ENCODE measurements at regions of chr9 and their contacts with region 1.

Region 1: GRCh38 chr9:25350011-25350410 is 328.2 kb downstream of the TUSC1 start:
- DNase-seq: no peak
- H3K4me3 ChIP-seq: no peak overlapping the region
- H3K27ac ChIP-seq: no peak overlapping the region
- H3K4me1 ChIP-seq: no peaks in the 10 kb centered on the region
- H3K27me3 ChIP-seq: no peaks in the 10 kb centered on the region
- CTCF ChIP-seq: no peak
- EP300 ChIP-seq: no peak
- POLR2A ChIP-seq: no peak

Region 2: GRCh38 chr9:25302601-25303000 is 47.4 kb before region 1 on chr9:
- in situ Hi-C with region 1: loop called in 1 of 4 experiments (anchors 10 kb)
- intact Hi-C with region 1: no loop called
- DNase-seq: no peak
- H3K4me3 ChIP-seq: no peak overlapping the region
- H3K27ac ChIP-seq: no peak overlapping the region
- H3K4me1 ChIP-seq: no peaks in the 10 kb centered on the region
- H3K27me3 ChIP-seq: no peaks in the 10 kb centered on the region
- CTCF ChIP-seq: no peak
- EP300 ChIP-seq: no peak
- POLR2A ChIP-seq: no peak

Region 3: GRCh38 chr9:25449503-25449902 is 99.5 kb after region 1 on chr9:
- in situ Hi-C with region 1: no loop called
- intact Hi-C with region 1: no loop called
- DNase-seq: no peak
- H3K4me3 ChIP-seq: no peak overlapping the region
- H3K27ac ChIP-seq: no peak overlapping the region
- H3K4me1 ChIP-seq: peaks cover 0 to 5% (median 0%) of the 10 kb centered on the region in 4 donors
- H3K27me3 ChIP-seq: no peaks in the 10 kb centered on the region
- CTCF ChIP-seq: no peak
- EP300 ChIP-seq: no peak
- POLR2A ChIP-seq: no peak